ENCODE measurements at regions of chr3 and their contacts with region 1.

Region 1: DNA sequence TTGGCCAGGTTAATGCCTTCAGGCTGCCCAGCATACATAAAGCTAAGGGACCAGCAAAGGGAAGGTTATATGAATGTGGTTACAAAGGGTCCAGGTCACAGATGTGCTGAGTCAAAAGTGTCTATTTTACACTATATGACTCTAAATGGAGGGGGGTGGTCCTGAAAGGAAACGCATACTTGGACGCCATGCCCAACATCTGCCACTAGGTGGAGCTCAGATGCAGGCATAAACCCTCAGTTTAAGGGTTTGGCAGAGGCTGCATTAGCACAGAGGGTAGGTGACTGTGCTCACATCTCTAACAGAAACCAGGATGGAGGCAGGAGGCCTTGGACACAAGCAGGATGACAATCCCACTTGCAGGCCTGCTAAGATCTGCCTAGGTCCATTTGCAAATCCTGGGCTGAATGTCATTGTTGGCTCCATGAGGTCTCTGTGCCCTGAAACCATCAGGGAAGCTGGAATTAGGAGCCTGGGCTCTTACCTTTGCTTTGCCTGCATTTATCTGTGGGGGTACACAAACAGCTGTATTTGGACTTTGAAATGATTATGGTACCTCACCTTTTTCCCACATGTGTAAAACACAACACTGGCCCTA is 55.8 kb downstream of the ZNF621 start:
- DNase-seq: peak; percentile 62
- ATAC-seq: peak; percentile 50 to 51

Region 2: DNA sequence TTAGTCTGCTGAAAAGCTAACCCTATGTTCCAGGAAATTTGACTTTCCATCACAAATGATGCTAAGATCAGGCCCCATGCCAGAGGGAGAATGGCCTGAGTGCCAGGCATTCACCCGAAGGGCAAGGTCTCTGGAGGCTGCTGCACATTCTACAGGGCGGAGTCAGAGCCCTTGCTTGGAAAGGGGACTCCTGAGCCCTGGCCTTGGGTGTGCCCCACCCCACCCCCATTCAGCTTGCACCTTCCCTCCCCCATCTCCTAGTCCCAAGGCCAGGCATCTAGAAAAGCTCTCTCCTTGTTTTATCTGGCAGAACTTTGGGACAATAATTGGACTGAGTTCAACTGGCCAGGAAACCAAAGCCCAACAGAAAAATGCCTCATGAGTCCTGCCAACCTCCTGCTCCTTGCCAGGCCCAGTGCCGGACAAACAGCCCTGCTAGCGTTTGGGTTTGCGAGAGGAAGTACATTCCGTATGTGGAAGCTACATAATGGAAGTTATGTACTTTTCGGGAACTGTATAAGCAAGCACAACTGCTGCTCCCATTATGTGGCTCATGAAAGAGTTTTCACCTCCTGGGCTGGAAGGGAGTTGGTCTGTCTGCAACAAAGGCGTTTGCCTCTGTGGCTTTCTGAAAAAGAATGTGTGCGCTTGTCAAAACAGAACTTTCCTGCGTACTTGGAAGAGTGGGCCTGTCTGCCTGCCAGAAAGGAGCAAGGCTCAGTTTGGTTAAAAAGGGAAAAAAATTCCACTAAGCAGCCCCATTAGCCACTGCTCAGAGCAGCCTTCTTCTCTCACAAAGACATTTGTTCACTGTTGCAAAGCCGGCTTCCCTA is 297.3 kb after region 1 on chr3:
- intact Hi-C with region 1: loop called in 1 of 2 experiments (anchors 10 kb)
- DNase-seq: peak; percentile 83
- ATAC-seq: peak; percentile 88 to 93

Region 3: DNA sequence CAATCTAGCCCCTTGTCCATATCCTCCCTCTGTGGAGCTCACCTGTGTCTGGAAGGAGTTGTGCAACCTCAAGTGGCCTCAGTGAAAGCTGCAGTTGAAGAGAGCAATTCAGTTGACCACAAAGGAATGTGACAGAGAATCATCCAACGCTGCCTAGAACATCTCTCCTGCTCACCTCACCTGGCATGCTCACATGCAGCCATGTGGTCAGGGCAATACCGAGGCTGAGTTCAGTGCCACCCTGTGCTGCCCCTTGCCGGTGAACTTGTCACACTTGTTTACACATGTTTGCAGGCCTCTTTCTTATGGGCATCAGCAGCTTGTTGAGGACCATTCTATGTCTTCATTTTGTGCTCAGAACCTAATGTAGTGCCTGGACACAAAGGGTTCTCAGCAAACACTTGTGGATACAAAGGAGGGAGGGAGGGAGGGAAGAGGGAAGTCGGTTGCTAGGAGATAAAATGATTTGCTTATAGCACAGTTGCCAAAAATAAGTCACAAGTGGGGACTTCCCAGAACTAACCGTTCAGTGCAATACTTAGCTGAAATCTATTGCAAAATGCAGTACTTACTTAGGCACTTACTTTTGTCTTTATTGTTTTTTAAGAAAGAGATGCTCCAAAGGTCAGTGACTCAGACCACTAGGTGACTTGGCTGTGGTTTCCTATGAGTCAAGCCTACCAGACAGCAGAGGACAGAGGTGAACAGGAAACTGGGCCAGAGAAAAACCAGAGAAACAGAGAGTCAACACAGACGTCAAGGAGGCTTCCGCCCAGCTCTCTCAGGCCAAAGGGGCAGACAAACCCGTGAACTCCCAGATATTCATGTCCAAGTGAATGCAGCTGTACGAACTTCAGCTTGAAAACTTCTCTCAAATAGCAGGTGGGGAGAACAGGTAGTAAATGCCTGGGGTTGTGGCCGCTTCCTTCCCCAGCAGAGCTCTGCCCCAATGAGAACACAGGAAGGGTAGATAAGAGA is 390.9 kb after region 1 on chr3:
- intact Hi-C with region 1: loop called in 1 of 2 experiments (anchors 10 kb)
- DNase-seq: peak; percentile 84
- ATAC-seq: peak; percentile 83 to 98

Region 4: DNA sequence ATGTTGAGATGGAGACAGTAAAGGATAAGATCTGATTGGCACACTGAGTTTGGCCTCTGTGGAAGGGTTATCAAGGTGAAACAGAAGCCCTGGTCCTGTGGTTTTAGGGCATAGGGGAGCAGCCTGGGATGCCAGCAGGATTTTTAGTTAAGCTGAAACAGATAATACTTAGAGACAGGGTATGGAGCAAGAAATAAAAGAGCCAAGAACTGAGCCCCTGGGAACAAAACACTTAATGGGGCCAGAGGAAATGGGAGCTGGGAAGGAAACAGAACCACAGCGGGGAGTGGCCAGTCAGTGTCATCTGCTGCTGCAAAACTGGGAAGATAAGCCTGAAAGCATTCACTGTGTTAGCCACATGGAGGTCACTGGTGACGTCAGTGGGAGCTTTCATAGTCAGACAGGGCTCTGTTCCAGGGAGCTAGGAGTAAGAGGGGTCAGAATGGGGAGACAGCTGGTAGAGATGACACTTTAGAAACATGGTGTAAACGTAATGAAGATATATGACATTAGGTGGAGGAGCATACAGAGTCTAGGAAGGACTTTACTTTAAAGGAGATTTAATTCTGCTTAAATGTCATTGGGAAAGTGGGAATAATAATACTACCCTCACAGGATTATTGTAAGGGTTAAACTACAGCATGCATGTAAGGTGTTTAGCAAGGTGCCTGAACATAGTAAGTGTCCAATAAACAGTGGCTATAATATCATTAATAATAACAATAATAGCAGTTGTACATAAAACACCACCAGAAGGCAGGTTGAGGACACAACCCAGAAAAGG is 446.0 kb after region 1 on chr3:
- intact Hi-C with region 1: loop called in 1 of 2 experiments (anchors 10 kb)
- DNase-seq: peak; percentile 90
- ATAC-seq: peak; percentile 94 to 97

Region 5: DNA sequence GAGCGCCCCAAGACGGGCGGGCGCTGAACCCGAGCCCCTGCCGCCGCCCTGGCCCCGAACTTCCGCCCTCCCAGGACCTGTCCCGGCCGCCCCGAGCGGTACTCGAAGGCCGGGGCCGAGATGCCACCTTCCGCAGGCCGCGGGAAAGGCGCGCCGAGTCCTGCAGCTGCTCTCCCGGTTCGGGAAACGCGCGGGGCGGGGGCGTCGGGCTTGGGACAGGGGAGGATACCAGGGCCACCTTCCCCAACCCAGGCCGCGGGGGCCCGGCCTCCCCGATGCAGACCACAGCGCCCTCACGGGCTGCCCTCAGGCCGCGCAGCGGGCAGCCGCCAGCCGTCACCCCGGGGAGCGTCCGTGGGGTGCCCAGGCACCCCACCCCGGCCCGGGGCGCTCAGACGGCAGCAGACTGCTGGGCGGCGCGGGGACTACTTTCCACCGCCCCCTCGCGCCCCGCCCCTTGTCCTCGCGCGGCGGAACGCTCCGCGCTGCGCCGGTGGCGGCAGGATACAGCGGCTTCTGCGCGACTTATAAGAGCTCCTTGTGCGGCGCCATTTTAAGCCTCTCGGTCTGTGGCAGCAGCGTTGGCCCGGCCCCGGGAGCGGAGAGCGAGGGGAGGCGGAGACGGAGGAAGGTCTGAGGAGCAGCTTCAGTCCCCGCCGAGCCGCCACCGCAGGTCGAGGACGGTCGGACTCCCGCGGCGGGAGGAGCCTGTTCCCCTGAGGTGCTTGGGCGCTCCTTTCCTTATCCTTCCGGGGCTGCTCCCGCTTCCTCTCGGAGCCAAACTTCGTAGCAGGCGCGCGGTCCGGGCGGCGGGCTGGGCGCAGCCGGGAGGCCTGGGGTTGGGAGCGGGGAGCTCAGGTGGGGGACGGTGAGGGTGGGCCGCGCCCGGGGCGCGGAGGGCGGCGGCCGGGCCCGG is 618.6 kb after region 1 on chr3 and contains the start of gene CTNNB1:
- intact Hi-C with region 1: loop called in 1 of 2 experiments (anchors 5 kb)
- DNase-seq: peak; percentile 93
- ATAC-seq: peak; percentile 93 to 94
- total RNA-seq, gene CTNNB1: 169 to 207 TPM

Region 6: DNA sequence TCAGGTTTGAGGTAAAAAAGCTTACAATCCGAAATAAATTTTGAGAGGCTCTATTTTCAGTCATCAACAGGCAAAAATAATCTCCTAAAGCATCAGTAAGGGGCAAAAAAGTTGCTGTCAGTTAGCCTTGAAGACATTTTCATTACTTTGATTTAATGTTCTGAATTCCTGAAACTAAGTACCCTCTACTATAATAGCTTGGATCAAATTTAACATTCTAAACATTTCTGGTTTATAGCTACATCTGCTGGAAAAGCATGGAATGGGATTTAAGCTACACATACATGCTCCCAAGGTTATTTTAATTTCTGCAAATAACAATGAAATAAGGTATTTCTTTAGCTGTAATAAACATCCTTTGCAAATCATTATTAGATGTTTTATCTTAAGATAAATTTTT is 1135.9 kb after region 1 on chr3:
- intact Hi-C with region 1: loop called in 1 of 2 experiments (anchors 5 kb)
- DNase-seq: no peak
- ATAC-seq: no peak

Region 7: GRCh38 chr3:41881233-41881821 is 1300.7 kb after region 1 on chr3:
- intact Hi-C with region 1: loop called (anchors 1 to 2 kb)
- DNase-seq: no peak
- ATAC-seq: no peak

Measured in left cardiac atrium (tissue), 4 donors.